Activated CD4-positive, alpha-beta T cell treated with anti-CD3 and anti-CD28 coated beads, Interleukin-2, amount 10 ng/mL, durations not matched to agents 24 days and 14 days (primary cell): ENCODE measurements at regions of chr17 and their contacts with region 1.

Region 1: GRCh38 chr17:18855831-18856569 is 1.9 kb upstream of the PRPSAP2 start:
- DNase-seq: peak; percentile 97
- H3K4me3 Mint-ChIP-seq: peak overlapping the region; percentile 92
- H3K27ac Mint-ChIP-seq: peak overlapping the region; percentile 86
- H3K4me1 Mint-ChIP-seq: peaks cover 38% of the 10 kb centered on the region
- H3K27me3 Mint-ChIP-seq: no peaks in the 10 kb centered on the region

Region 2: DNA sequence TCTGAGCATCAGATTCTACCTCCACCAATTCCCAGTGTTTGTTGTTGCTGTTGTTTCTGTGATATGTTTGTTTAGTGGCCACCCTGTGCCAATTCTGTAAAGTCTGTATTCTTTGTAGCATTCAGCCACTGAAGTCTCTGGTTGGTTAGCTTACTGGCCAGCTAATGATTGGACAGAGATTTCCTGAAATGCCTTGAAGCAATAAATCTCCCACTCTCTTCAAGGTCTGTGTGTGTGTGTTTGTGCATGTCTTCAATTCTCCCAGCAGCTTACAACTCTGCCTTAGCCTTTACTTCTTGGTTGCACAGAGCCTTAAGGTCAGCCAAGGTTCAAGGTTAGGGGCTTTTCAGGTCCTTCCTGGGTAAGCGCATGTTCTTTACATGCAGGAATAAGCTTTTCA is 40.1 kb after region 1 on chr17:
- intact Hi-C with region 1: loop called (anchors 1 kb)
- DNase-seq: no peak
- H3K4me3 Mint-ChIP-seq: no peak overlapping the region
- H3K27ac Mint-ChIP-seq: no peak overlapping the region
- H3K4me1 Mint-ChIP-seq: peaks cover 11% of the 10 kb centered on the region
- H3K27me3 Mint-ChIP-seq: no peaks in the 10 kb centered on the region

Region 3: DNA sequence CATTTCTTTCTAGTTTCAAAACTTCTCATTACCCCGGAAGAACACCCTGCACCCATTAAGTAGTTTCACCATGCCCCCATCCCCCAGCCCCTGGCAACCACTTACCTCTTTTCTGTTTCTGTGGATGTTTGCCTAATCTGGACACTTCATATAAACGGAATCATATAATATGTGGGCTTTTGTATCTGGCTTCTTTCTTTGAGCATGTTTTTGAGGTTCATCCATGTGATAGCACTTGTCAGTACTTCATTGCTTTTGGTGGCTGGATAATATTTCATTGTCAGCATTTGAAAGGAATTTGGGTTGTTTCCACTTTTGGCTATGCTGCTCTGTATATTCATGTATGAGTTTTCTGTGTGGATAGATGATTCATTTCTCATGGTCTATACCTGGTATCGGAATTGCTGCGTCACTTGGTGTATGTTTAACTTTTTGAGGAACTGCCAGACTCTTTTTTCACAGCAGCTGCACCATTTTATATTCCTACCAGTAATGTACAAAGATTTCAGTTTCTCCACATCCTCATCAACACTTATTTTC is 66.0 kb after region 1 on chr17:
- intact Hi-C with region 1: loop called (anchors 1 kb)
- DNase-seq: peak; percentile 69
- H3K4me3 Mint-ChIP-seq: peak overlapping the region; percentile 64
- H3K27ac Mint-ChIP-seq: peak overlapping the region; percentile 90
- H3K4me1 Mint-ChIP-seq: peaks cover 51% of the 10 kb centered on the region
- H3K27me3 Mint-ChIP-seq: no peaks in the 10 kb centered on the region

Region 4: GRCh38 chr17:19004421-19005136 is 148.6 kb after region 1 on chr17 and contains the start of gene FAM83G:
- intact Hi-C with region 1: loop called (anchors 2 kb)
- DNase-seq: peak; percentile 94
- H3K4me3 Mint-ChIP-seq: peak within 1 kb of the TSS; percentile 90
- H3K27ac Mint-ChIP-seq: peak within 1 kb of the TSS; percentile 91
- H3K4me1 Mint-ChIP-seq: peaks cover 21% of the 10 kb centered on the region
- H3K27me3 Mint-ChIP-seq: peaks cover 14% of the 10 kb centered on the region
- total RNA-seq, gene FAM83G: 15.7 and 17.8 TPM in 2 replicates

Region 5: GRCh38 chr17:19648475-19649406 is 792.7 kb after region 1 on chr17 and contains the start of gene ALDH3A2:
- intact Hi-C with region 1: no loop called
- DNase-seq: peak; percentile 98
- H3K4me3 Mint-ChIP-seq: peak within 1 kb of the TSS; percentile 89
- H3K27ac Mint-ChIP-seq: peak within 1 kb of the TSS; percentile 91
- H3K4me1 Mint-ChIP-seq: peaks cover 36% of the 10 kb centered on the region
- H3K27me3 Mint-ChIP-seq: peaks cover 9% of the 10 kb centered on the region
- total RNA-seq, gene ALDH3A2: 32.8 and 34.3 TPM in 2 replicates

Region 6: DNA sequence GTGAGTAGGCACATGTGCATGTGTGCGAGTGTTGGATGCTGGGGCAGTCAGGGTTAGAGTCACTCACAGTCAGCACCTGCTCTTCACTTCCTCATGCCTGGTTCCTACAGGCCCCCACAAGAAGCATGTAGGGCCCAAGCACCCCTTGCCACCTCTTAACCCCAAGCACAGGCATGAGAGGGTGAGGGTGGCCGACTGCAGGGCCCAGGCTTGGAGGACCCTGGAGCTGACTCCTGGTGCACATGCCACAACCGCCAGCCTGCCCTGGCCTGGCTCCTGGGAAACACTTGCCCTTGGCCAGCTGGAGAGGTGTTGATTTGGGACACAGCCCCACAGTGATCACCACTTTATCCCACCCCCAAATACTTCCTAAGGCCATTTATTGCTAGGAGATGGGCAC is 1706.6 kb after region 1 on chr17:
- intact Hi-C with region 1: no loop called
- DNase-seq: no peak
- H3K4me3 Mint-ChIP-seq: no peak overlapping the region
- H3K27ac Mint-ChIP-seq: no peak overlapping the region
- H3K4me1 Mint-ChIP-seq: no peaks in the 10 kb centered on the region
- H3K27me3 Mint-ChIP-seq: peaks cover 2% of the 10 kb centered on the region